Pancreas (tissue), 10 donors: ENCODE measurements at regions of chr17 and their contacts with region 1.

Region 1: GRCh38 chr17:10875979-10876555 is 38.2 kb upstream of the PIRT start:
- DNase-seq: peak in 5 of 6 donors; percentile 20 to 65 (median 46)
- ATAC-seq: peak; percentile 56 to 87 (median 79)
- H3K4me3 ChIP-seq: no peak overlapping the region
- H3K27ac ChIP-seq: no peak overlapping the region
- H3K4me1 ChIP-seq: no peaks in the 10 kb centered on the region
- H3K27me3 ChIP-seq: peaks cover 0 to 8% (median 0%) of the 10 kb centered on the region in 4 donors
- CTCF ChIP-seq: peak; percentile 43 to 70 (median 56)

Region 2: DNA sequence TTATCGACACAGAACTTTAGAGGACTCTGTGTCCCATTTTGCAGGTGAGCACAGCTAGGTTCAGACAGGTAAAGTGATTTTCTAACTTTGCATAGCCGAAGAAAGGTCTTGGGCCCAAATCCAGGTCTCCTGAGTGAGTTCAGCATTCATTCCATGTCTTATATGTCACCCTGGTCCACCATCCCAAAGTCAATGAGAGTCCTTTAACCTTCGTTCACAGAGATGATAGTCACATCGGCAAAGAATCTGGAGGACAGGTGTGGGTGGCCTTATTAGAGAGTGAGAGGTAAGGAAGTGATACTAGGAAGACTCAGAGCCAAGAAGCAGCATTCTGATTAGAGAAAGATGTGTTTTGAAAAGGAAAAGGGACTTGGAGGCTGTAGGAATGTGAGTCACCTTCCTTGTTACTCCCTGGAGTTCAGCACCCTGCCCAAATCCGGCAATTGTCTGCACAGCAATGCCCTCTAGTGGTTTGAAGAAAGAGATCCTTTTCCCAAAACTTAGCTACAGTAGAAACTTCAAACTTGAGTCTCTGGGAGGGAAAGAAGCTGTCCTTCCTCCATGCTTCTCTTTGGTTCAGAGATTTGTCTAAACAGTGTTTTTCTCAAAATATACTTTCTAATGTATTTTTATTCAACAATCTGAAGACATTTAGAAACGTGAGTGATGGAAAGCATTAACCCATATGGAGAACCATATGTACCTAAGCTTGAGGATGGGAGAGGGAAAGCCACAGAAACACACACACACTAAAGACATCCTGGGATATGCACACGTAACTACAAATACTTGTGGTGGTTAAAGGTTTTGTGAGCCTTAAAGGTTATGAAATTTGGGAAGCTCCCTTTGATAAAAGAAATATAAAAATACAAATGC is 268.5 kb after region 1 on chr17:
- intact Hi-C with region 1: loop called in 1 of 3 experiments (anchors 10 kb)
- DNase-seq: peak in 3 of 6 donors; percentile 9 to 54 (median 35)
- ATAC-seq: peak in 3 of 4 donors; percentile 76 to 82 (median 79)
- H3K4me3 ChIP-seq: no peak overlapping the region
- H3K27ac ChIP-seq: no peak overlapping the region
- H3K4me1 ChIP-seq: no peaks in the 10 kb centered on the region
- H3K27me3 ChIP-seq: no peaks in the 10 kb centered on the region
- CTCF ChIP-seq: peak; percentile 32 to 59 (median 51)

Region 3: DNA sequence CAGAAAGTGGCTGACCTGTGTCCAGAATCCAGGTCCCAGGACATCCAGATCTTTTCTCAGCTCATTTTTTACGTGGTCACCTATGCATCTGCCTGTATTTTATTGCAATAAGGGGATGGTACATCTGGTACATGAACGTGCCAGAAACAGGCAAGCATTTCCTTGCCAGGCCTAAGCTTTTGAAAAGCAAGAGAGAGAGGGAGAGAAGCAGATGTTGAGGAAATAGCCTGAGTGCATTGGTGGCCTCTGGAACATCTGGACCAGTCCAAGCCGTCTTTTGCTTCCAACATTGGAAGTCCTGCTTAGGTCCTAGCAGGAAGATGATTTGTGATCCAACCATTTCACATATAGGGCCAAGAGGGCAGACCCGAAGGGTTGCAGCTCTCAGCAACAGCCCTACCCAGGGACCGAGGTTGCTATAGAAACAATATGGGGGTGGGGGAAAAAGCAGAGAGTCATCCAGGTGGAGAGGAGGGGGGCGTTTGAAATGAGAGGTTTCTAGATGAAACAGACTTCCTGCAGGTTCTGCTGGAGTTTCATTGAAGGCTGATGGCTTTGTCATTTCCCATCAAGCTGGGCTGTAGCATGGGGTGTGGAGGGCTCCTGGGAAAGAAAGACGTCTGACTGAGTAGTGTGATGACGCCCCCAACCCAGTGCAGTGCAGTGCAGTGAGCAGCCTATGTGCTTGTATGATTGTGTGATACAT is 426.5 kb after region 1 on chr17:
- intact Hi-C with region 1: loop called in 1 of 3 experiments (anchors 10 kb)
- DNase-seq: no peak
- ATAC-seq: no peak
- H3K4me3 ChIP-seq: no peak overlapping the region
- H3K27ac ChIP-seq: no peak overlapping the region
- H3K4me1 ChIP-seq: no peaks in the 10 kb centered on the region
- H3K27me3 ChIP-seq: no peaks in the 10 kb centered on the region
- CTCF ChIP-seq: no peak

Region 4: DNA sequence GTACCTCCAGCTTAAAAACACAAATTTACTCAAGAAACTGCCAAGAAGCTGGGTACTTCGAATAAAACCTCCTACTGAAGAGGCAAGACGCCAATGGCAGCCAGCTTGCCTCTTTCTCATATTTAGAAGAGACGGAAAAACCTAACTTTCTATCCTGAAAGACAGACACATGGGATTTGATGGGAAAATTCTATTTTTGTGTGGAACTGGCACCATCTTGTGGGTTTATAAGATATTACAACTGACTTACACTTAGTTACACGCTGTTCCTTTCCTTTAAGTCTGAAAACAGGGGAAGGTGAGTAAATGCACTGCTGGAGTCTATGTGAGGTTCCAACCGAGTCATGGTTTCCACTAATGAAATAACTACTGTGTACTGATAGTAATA is 1110.9 kb after region 1 on chr17:
- intact Hi-C with region 1: loop called in 1 of 3 experiments (anchors 10 kb)
- DNase-seq: no peak
- ATAC-seq: peak in 3 of 4 donors; percentile 76 to 80 (median 78)
- H3K4me3 ChIP-seq: no peak overlapping the region
- H3K27ac ChIP-seq: no peak overlapping the region
- H3K4me1 ChIP-seq: no peaks in the 10 kb centered on the region
- H3K27me3 ChIP-seq: no peaks in the 10 kb centered on the region
- CTCF ChIP-seq: peak; percentile 16 to 47 (median 38)